Mammary epithelial cell (primary cell): ENCODE measurements at regions of chr6 and their contacts with region 1.

Region 1: GRCh38 chr6:28355743-28356665 is 6.3 kb downstream of the ZKSCAN3 start:
- DNase-seq: peak; percentile 77
- H3K4me3 ChIP-seq: peak overlapping the region; percentile 50 to 60 (median 59)
- H3K27ac ChIP-seq: peak overlapping the region; percentile 49
- H3K4me1 ChIP-seq: peaks cover 16% of the 10 kb centered on the region
- H3K27me3 ChIP-seq: no peaks in the 10 kb centered on the region
- CTCF ChIP-seq: peak; percentile 73 to 78

Region 2: GRCh38 chr6:27902335-27903314 is 453.4 kb before region 1 on chr6:
- CTCF ChIA-PET with region 1: no interaction called
- dilution Hi-C with region 1: no loop called
- in situ Hi-C with region 1: no loop called
- intact Hi-C with region 1: loop called (anchors 5 kb)
- DNase-seq: peak; percentile 80
- H3K4me3 ChIP-seq: peak overlapping the region; percentile 55 to 84 (median 68)
- H3K27ac ChIP-seq: peak overlapping the region; percentile 60
- H3K4me1 ChIP-seq: peaks cover 10% of the 10 kb centered on the region
- H3K27me3 ChIP-seq: no peaks in the 10 kb centered on the region
- CTCF ChIP-seq: no peak

Region 3: DNA sequence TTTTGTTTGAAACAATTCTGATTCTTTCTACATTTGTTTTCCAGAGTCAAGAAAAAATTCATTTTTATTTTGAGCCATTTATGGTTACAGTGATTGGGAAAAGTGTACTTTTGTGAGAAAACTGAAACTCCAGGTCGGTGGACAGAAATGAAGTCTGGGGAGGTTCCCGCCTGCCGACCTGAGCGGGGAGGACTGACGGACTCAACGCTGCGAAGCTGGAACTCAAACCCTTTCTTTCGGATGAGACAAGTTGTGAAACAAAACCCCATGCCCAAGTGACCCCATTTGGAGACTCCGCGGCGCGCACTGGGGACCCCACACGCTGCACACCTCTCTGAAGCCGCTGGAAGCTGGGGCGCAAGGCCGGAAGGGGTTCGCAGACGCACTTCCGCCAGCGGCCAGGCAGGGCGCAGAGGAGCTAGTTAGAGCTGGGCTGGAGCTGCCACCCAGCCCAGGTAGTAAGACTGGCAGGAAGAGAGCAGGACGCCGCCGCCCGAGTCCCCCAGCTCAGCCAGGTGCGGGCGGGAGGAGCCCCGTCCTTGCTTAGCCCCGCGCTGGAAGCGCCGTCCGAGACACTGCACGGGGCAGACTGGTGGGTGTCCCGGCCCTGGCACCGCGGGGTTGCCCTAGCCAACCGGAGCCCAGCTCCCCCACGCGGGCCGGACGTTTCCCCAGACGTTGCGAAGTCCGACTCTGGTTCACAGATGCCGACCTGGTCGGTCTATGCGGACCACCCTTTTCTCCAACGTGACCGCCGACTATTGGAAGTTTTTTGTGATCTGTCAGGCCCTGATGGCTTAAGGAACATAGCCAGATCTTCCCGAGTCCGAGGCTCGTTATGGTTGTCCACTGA is 251.4 kb before region 1 on chr6:
- CTCF ChIA-PET with region 1: no interaction called
- dilution Hi-C with region 1: no loop called
- in situ Hi-C with region 1: no loop called
- intact Hi-C with region 1: loop called (anchors 1 kb)
- DNase-seq: peak; percentile 80
- H3K4me3 ChIP-seq: peak overlapping the region; percentile 66 to 86 (median 73)
- H3K27ac ChIP-seq: peak overlapping the region; percentile 54
- H3K4me1 ChIP-seq: peaks cover 10% of the 10 kb centered on the region
- H3K27me3 ChIP-seq: no peaks in the 10 kb centered on the region
- CTCF ChIP-seq: peak; percentile 35 to 76

Region 4: GRCh38 chr6:28212510-28213212 is 143.3 kb before region 1 on chr6:
- CTCF ChIA-PET with region 1: no interaction called
- dilution Hi-C with region 1: no loop called
- in situ Hi-C with region 1: no loop called
- intact Hi-C with region 1: loop called (anchors 2 kb)
- DNase-seq: peak; percentile 93
- H3K4me3 ChIP-seq: peak overlapping the region; percentile 61 to 62 (median 61)
- H3K27ac ChIP-seq: peak overlapping the region; percentile 77
- H3K4me1 ChIP-seq: peaks cover 19% of the 10 kb centered on the region
- H3K27me3 ChIP-seq: no peaks in the 10 kb centered on the region
- CTCF ChIP-seq: peak; percentile 13 to 28

Region 5: GRCh38 chr6:28266962-28267694 is 88.9 kb before region 1 on chr6 and contains the start of gene ZSCAN26:
- CTCF ChIA-PET with region 1: interaction called, 3 read pairs
- dilution Hi-C with region 1: no loop called
- in situ Hi-C with region 1: no loop called
- intact Hi-C with region 1: loop called (anchors 1 kb)
- DNase-seq: peak; percentile 91
- H3K4me3 ChIP-seq: peak within 1 kb of the TSS; percentile 85 to 94 (median 91)
- H3K27ac ChIP-seq: peak within 1 kb of the TSS; percentile 70
- H3K4me1 ChIP-seq: peaks cover 22% of the 10 kb centered on the region
- H3K27me3 ChIP-seq: no peaks in the 10 kb centered on the region
- CTCF ChIP-seq: no peak
- total RNA-seq, gene ZSCAN26: 12.4 to 12.7 TPM

Region 6: GRCh38 chr6:28281288-28282064 is 74.5 kb before region 1 on chr6 and contains the start of gene PGBD1:
- CTCF ChIA-PET with region 1: no interaction called
- dilution Hi-C with region 1: no loop called
- in situ Hi-C with region 1: no loop called
- intact Hi-C with region 1: loop called (anchors 5 kb)
- DNase-seq: peak; percentile 61
- H3K4me3 ChIP-seq: peak within 1 kb of the TSS; percentile 70 to 93 (median 70)
- H3K27ac ChIP-seq: peak within 1 kb of the TSS; percentile 22
- H3K4me1 ChIP-seq: peaks cover 6% of the 10 kb centered on the region
- H3K27me3 ChIP-seq: no peaks in the 10 kb centered on the region
- CTCF ChIP-seq: no peak
- total RNA-seq, gene PGBD1: 5.7 to 7.7 TPM

Region 7: DNA sequence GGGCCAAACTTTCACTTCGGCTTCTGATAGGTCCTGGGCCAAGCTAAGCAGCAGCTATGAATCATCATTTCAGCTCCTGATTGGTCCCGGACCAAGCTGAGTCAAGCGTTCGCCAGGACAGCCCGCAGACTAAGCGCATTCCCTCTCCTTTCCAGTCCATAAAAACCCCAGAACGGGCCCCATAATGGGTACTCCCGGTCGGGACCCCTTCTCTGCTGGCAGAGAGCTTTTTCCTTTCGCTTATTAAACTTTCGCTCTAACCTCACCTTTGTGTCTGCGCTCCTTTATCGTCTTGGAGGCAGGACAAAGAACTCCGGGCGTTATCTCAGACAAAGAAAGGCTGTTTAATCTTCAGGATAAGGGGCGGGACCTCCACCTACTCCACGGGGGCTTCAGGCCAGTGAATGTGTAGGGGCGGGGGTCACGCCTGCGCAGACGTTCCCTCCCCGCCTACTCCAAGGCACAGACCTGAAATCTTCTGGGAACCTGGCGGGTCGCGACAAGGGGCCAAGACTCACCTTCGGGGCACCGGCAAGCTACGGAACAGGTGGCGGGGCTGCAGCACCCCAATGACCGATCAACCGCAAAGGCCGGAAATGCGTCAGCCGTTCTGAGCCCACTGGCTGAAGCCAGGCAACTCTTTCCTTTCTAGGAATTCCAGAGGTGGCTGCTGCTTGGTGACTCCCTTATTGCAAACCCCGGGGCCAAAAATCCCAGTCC is 20.3 kb before region 1 on chr6 and contains the start of gene ZSCAN31:
- CTCF ChIA-PET with region 1: interaction called, 3 read pairs
- dilution Hi-C with region 1: no loop called
- in situ Hi-C with region 1: no loop called
- intact Hi-C with region 1: loop called (anchors 2 kb)
- DNase-seq: peak; percentile 94
- H3K4me3 ChIP-seq: peak within 1 kb of the TSS; percentile 59 to 74 (median 69)
- H3K27ac ChIP-seq: peak within 1 kb of the TSS; percentile 65
- H3K4me1 ChIP-seq: peaks cover 11% of the 10 kb centered on the region
- H3K27me3 ChIP-seq: no peaks in the 10 kb centered on the region
- CTCF ChIP-seq: no peak
- total RNA-seq, gene ZSCAN31: 3.8 to 5.8 TPM